Mammary epithelial cell (primary cell): ENCODE measurements at regions of chr1 and their contacts with region 1.

Region 1: DNA sequence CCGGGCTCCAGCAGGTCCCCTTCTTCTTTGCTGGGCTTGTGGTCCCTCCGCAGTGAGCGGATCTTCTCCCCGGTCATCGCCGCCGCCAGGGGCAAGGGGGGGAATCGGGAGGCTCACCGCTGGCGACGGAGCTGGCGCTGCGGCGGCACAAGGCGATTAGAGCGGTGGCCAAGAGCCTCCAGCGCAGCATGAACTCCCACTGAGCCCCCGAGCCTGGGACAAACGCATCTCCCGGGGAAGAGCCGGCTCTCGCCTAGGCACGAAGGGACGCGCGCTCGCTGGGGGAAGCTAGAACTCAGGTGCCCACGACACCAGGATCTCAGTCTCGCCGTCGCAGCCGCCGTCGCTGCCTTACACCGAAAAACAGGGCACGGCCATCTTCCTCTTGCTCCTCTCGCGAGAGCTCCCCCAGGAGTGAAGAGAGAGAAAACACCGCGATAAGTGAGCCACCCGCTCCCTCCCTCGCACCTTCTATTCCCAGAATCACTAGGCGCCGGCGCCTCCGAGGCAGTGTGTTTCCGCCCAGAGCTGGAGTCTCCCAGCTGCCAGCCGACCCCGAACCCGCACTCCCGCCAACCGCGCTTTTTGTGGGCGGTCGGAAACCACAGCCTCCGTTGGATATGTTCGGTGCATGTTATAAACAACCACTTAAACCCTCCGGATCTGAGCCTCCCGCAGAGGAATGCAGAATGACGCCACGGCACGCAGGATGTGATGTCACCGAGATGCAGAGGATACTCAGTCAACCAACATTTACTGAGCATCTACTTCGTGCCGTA is at the start of gene ANKRD13C:
- DNase-seq: peak; percentile 93
- H3K4me3 ChIP-seq: peak within 1 kb of the TSS; percentile 82 to 99 (median 94)
- H3K27ac ChIP-seq: peak within 1 kb of the TSS; percentile 88
- H3K4me1 ChIP-seq: peaks cover 25% of the 10 kb centered on the region
- H3K27me3 ChIP-seq: no peaks in the 10 kb centered on the region
- CTCF ChIP-seq: no peak
- total RNA-seq, gene ANKRD13C: 16.7 to 24.0 TPM

Region 2: GRCh38 chr1:70072231-70072751 is 282.2 kb before region 1 on chr1:
- CTCF ChIA-PET with region 1: no interaction called
- dilution Hi-C with region 1: no loop called
- in situ Hi-C with region 1: no loop called
- intact Hi-C with region 1: no loop called
- DNase-seq: peak; percentile 14
- H3K4me3 ChIP-seq: no peak overlapping the region
- H3K27ac ChIP-seq: no peak overlapping the region
- H3K4me1 ChIP-seq: no peaks in the 10 kb centered on the region
- H3K27me3 ChIP-seq: no peaks in the 10 kb centered on the region
- CTCF ChIP-seq: no peak

Region 3: GRCh38 chr1:70134148-70134547 is 220.4 kb before region 1 on chr1:
- CTCF ChIA-PET with region 1: no interaction called
- dilution Hi-C with region 1: no loop called
- in situ Hi-C with region 1: no loop called
- intact Hi-C with region 1: loop called (anchors 10 kb)
- DNase-seq: no peak
- H3K4me3 ChIP-seq: no peak overlapping the region
- H3K27ac ChIP-seq: no peak overlapping the region
- H3K4me1 ChIP-seq: no peaks in the 10 kb centered on the region
- H3K27me3 ChIP-seq: no peaks in the 10 kb centered on the region
- CTCF ChIP-seq: no peak

Region 4: DNA sequence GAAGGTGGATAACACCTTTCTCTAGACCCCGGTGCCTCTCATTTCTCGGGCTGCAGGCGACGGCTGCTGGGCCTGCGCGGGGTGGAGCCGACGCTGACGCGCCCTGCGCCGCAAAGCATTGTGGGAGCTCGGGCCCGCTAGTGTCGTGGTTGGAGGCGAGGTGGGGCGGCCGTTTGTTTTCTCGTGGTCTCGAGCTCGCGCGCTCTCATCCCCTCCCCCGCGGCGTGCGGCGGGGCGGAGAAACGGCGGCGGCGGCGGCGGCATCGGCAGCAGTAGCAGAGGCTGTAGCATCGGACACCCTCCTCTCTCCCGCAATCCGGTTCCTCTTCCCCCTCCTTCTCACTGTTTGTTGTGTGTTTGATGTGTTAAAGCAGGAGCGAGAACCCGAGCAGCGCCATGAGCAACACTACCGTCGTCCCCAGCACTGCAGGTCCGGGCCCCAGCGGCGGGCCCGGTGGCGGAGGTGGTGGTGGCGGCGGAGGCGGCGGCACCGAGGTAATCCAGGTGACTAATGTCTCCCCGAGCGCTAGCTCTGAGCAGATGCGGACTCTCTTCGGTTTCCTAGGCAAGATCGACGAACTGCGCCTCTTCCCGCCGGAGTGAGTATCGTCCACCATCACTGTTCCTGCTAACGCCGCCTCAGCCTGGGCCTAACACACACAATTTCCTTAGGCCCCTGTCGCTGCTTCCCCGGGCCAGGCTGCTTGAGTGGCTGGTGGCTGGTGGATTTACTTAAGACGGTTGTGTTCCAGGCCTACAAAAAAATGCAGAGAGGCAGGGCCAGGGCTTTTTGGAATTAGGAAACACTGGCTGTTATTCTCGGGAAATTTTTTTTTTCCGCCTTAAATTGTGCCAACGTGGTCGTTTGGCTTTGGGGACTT is 133.0 kb before region 1 on chr1 and contains the start of gene SRSF11:
- CTCF ChIA-PET with region 1: no interaction called
- dilution Hi-C with region 1: no loop called
- in situ Hi-C with region 1: no loop called
- intact Hi-C with region 1: loop called (anchors 5 kb)
- DNase-seq: peak; percentile 93
- H3K4me3 ChIP-seq: peak within 1 kb of the TSS; percentile 65 to 99 (median 80)
- H3K27ac ChIP-seq: peak within 1 kb of the TSS; percentile 90
- H3K4me1 ChIP-seq: peaks cover 11% of the 10 kb centered on the region
- H3K27me3 ChIP-seq: no peaks in the 10 kb centered on the region
- CTCF ChIP-seq: peak in 1 of 2 donors; percentile 11
- total RNA-seq, gene SRSF11: 95.0 to 141 TPM

Region 5: DNA sequence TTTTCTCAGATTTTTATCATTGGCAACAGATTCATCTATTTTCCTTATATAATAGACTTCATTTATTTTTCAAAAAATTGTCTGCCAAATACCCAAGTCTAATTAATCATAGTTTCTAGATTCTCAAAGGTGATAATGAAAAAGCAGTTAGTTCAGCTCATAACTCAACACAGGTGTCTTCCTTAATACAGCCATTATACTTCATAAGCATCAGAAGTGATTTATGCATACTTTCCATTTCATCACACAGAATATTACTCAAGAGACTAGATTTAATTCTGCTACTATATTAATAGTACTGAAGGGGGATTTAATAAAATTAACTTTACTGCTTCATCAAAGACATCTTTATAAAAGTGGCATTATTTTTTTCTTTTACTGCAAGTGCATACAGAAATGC is 114.6 kb before region 1 on chr1:
- CTCF ChIA-PET with region 1: no interaction called
- dilution Hi-C with region 1: no loop called
- in situ Hi-C with region 1: no loop called
- intact Hi-C with region 1: no loop called
- DNase-seq: no peak
- H3K4me3 ChIP-seq: no peak overlapping the region
- H3K27ac ChIP-seq: no peak overlapping the region
- H3K4me1 ChIP-seq: no peaks in the 10 kb centered on the region
- H3K27me3 ChIP-seq: no peaks in the 10 kb centered on the region
- CTCF ChIP-seq: no peak

Region 6: DNA sequence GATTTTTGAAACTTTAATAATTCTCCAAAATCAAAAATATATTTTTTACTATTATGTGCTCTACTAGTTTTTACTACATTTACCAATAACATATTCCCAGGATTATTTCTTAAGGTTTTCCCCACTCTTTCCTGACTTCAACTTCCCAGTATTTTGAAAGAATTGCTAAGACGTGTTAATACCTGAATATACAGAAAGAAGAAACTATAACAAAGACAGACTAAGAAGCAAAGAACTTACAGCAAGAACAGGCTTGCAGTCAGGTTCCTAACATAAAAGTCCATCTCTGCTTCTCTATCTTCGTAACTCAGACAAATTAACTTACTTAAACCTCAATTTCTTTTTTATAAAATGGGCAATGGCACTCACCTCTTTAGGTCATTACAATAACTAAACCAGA is 70.2 kb before region 1 on chr1:
- CTCF ChIA-PET with region 1: no interaction called
- dilution Hi-C with region 1: no loop called
- in situ Hi-C with region 1: no loop called
- intact Hi-C with region 1: loop called (anchors 5 kb)
- DNase-seq: peak; percentile 68
- H3K4me3 ChIP-seq: peak overlapping the region in 1 of 3 experiments; percentile 39
- H3K27ac ChIP-seq: peak overlapping the region; percentile 66
- H3K4me1 ChIP-seq: no peaks in the 10 kb centered on the region
- H3K27me3 ChIP-seq: no peaks in the 10 kb centered on the region
- CTCF ChIP-seq: no peak

Region 7: GRCh38 chr1:70319750-70320149 is 34.8 kb before region 1 on chr1:
- CTCF ChIA-PET with region 1: no interaction called
- dilution Hi-C with region 1: no loop called
- in situ Hi-C with region 1: no loop called
- intact Hi-C with region 1: loop called (anchors 5 kb)
- DNase-seq: peak; percentile 35
- H3K4me3 ChIP-seq: no peak overlapping the region
- H3K27ac ChIP-seq: no peak overlapping the region
- H3K4me1 ChIP-seq: peaks cover 11% of the 10 kb centered on the region
- H3K27me3 ChIP-seq: no peaks in the 10 kb centered on the region
- CTCF ChIP-seq: no peak

Region 8: DNA sequence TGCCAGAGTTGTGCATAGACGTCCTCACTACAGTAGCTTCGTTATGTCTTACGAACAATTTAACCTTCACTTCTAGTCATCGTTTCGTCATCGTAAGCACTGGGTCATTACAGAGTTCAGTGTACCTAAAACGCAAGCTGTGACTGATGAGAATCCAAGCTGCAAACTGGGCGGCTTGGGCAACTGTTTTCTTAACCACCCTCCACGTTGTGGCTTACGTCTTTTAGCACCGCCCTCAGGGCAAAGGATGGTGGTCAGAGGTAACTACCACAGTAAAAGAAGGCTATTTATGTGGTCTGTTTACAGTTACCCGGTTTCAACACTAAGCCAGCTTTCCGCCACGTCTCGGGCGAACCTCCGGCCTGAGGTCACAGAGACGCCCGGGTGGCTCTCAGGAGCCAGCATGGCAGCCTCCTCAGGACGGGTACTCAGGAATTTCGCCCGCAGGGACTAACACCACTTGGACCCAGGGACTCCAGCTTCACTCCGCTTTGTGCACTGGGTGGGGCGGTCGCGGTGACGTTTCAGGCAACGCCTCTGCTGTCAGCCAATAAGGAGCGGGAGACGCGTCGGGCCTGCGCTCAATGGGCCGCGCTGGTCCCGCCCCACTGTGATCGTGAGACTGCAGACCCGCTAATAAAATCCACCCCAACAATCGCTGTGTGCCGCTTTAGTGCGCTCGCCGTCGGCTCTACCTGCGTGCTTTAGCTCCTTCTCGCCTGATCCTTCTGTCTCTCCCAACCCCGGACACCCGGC is 56.3 kb after region 1 on chr1 and contains the start of gene CTH:
- CTCF ChIA-PET with region 1: no interaction called
- dilution Hi-C with region 1: no loop called
- in situ Hi-C with region 1: loop called in 1 of 2 experiments (anchors 5 kb)
- intact Hi-C with region 1: loop called (anchors 1 kb)
- DNase-seq: peak; percentile 95
- H3K4me3 ChIP-seq: peak within 1 kb of the TSS; percentile 80 to 98 (median 92)
- H3K27ac ChIP-seq: peak within 1 kb of the TSS; percentile 92
- H3K4me1 ChIP-seq: peaks cover 4% of the 10 kb centered on the region
- H3K27me3 ChIP-seq: no peaks in the 10 kb centered on the region
- CTCF ChIP-seq: no peak
- total RNA-seq, gene CTH: 3.5 to 6.2 TPM

Region 9: DNA sequence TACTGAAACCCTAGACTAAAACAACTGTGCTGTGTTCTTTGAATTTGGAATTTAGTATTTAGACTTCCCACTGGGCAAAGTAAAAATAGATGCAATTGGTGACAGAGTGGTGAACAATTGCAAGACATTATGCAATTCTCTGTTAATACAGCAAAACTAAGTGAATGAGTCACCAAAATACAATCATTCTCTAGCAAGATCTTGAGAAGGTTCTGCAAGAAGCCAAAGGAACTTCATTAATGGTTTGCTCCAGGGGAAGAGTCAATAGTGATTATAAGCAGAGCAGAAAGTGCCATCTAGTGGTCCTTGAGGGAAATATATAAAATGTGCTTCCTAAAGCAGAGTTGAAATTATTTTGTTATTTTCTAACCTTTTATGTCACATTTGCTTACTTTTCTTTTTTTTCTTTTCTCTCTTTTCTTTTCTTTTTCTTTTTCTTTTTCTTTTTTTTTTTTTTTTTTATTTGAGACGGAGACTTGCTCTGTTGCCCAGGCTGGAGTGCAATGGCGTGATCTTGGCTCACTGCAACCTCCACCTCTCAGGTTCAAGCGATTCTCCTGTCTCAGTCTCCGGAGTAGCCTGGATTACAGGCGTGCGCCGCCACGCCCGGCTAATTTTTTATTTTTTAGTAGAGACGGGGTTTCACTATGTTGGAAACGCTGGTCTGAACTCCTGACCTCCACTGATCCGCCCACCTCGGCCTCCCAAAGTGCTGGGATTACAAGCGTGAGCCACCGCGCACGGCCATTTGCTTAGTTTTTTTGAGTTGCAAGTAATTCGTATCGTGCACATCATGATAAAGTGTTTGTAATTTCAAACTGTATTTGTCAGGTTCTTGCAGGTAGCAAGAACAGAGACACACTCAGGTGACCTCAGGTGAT is 155.7 kb after region 1 on chr1:
- CTCF ChIA-PET with region 1: no interaction called
- dilution Hi-C with region 1: no loop called
- in situ Hi-C with region 1: no loop called
- intact Hi-C with region 1: loop called (anchors 5 kb)
- DNase-seq: peak; percentile 84
- H3K4me3 ChIP-seq: no peak overlapping the region
- H3K27ac ChIP-seq: no peak overlapping the region
- H3K4me1 ChIP-seq: peaks cover 13% of the 10 kb centered on the region
- H3K27me3 ChIP-seq: no peaks in the 10 kb centered on the region
- CTCF ChIP-seq: peak; percentile 63 to 66